Ascending aorta (tissue), 2 donors: ENCODE measurements at regions of chr12 and their contacts with region 1.

Region 1: DNA sequence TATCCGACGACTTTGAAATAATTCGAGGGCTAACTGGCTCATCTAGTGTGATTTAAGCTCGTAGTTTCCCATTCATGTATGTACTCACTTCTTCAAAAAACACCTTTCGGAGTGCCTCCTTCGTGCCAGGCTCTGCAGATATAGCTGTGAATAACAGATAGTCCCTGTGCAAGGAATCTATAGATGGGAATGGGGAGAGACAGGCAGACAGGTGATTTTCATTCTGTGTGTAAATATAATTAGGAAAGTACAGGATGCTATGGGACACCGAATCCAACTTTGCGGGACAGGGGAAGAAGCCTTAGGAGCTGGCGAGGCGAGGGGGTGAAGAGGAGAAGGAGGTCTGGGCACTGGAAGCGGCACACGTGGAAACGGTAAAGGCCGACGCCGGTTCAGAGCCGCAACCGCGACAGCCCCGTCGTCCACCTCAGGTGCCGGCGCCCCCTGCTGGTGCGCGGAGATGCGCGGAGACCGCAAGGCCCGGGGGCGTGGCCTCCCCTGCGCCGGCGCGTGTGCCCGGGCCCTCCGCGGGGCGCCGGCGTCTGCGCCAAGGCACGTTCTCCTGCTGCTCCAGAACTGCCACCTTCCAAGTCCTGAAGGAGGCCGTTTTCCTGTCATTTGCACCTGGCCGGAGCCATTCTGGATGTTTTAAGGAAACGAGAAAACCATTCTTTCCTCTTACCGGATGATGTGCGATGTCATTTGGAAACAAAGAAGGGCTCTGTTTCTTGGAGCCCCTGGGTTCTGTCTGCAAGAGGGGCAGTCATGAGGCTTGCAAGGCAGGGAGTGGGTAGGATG is 18.0 kb upstream of the CACNA1C start:
- DNase-seq: peak; percentile 30 to 91
- H3K4me3 ChIP-seq: peak overlapping the region; percentile 42 to 54
- H3K27ac ChIP-seq: no peak overlapping the region
- H3K4me1 ChIP-seq: peaks cover 3 to 11% of the 10 kb centered on the region in 2 donors
- H3K27me3 ChIP-seq: no peaks in the 10 kb centered on the region
- CTCF ChIP-seq: peak; percentile 71 to 97 (median 76)

Region 2: GRCh38 chr12:1650260-1650977 is 384.4 kb before region 1 on chr12:
- intact Hi-C with region 1: loop called (anchors 10 kb)
- DNase-seq: no peak
- H3K4me3 ChIP-seq: no peak overlapping the region
- H3K27ac ChIP-seq: peak overlapping the region in 1 of 2 donors; percentile 47
- H3K4me1 ChIP-seq: peaks cover 0 to 12% of the 10 kb centered on the region in 2 donors
- H3K27me3 ChIP-seq: no peaks in the 10 kb centered on the region
- CTCF ChIP-seq: no peak

Region 3: DNA sequence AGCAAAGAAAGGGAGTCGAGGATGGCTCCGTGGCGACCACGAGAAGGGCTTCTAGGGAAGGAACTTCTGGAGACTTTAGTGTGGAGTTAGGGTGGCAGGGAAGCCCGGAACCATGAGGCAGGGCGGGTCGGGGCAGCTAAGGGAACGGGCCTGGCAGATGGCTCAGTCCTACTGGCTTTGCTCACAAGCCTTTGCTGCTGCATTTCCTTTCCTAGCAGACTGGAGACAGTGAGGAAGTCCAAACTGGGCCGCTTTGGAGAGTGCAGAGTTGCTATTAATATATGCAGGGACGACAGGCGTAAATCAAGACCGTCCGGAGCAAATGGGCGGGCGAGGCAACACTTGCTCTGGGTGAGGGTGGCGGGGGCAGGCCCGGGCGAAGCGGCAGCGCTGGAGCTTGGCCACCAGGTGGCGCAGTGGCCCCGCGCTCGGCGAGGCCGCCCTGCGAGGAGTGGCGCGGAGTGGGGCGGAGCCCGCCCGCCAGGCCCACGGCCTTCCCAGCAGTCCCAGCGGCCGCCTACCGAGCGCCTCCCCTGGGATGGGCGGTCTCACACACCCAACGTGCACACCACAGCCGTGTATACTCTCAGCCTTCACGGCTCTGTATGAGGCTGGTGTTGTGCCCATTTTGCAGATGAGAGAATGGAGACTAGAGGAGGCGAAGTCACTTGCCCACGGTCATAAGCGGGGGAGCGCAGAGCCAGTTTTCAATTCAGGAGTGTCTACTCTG is 238.9 kb before region 1 on chr12:
- intact Hi-C with region 1: loop called (anchors 1 kb)
- DNase-seq: peak; percentile 72 to 96
- H3K4me3 ChIP-seq: peak overlapping the region; percentile 73 to 81
- H3K27ac ChIP-seq: peak overlapping the region; percentile 56 to 81
- H3K4me1 ChIP-seq: peaks cover 6 to 13% of the 10 kb centered on the region in 2 donors
- H3K27me3 ChIP-seq: no peaks in the 10 kb centered on the region
- CTCF ChIP-seq: peak; percentile 77 to 100 (median 90)

Region 4: GRCh38 chr12:1917172-1918065 is 117.4 kb before region 1 on chr12:
- intact Hi-C with region 1: no loop called
- DNase-seq: no peak
- H3K4me3 ChIP-seq: peak overlapping the region in 1 of 2 donors; percentile 39
- H3K27ac ChIP-seq: peak overlapping the region; percentile 40 to 65
- H3K4me1 ChIP-seq: peaks cover 0 to 5% of the 10 kb centered on the region in 2 donors
- H3K27me3 ChIP-seq: no peaks in the 10 kb centered on the region
- CTCF ChIP-seq: no peak

Region 5: DNA sequence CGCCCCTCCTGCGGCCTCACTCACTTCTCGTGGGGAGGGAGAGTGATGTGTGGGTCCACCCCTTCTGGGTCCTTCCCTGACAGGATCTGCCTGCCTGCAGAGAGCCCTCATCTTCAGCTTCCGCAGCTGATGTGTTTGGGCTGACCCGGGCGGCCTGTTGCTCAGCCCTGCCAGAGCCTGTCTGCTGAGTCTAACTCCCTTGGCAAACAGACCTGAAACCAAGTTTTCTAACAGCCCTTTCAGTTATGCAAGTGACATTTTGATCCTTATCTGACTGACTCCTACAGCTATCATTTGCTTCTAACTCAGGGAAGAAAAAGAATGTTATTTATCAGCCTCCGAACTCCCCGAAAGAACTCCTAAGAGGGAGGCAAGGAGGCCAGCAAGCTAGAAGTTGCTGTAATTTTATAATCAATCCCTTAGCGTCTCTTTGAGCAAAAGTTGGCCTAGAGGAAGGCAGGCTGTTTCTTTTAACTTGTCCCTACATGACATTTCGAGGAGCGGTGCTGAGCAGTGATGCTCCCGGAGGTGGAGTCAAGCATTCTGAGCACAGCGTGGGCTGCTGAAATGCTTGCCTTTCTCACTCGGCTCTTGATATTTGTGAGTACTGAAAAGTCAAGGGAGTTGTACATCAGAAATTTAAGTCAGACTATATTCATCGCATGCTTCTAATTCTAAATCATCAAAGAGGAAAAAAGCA is 84.9 kb before region 1 on chr12:
- intact Hi-C with region 1: loop called (anchors 5 kb)
- DNase-seq: no peak
- H3K4me3 ChIP-seq: no peak overlapping the region
- H3K27ac ChIP-seq: peak overlapping the region in 1 of 2 donors; percentile 43
- H3K4me1 ChIP-seq: no peaks in the 10 kb centered on the region
- H3K27me3 ChIP-seq: no peaks in the 10 kb centered on the region
- CTCF ChIP-seq: no peak

Region 6: DNA sequence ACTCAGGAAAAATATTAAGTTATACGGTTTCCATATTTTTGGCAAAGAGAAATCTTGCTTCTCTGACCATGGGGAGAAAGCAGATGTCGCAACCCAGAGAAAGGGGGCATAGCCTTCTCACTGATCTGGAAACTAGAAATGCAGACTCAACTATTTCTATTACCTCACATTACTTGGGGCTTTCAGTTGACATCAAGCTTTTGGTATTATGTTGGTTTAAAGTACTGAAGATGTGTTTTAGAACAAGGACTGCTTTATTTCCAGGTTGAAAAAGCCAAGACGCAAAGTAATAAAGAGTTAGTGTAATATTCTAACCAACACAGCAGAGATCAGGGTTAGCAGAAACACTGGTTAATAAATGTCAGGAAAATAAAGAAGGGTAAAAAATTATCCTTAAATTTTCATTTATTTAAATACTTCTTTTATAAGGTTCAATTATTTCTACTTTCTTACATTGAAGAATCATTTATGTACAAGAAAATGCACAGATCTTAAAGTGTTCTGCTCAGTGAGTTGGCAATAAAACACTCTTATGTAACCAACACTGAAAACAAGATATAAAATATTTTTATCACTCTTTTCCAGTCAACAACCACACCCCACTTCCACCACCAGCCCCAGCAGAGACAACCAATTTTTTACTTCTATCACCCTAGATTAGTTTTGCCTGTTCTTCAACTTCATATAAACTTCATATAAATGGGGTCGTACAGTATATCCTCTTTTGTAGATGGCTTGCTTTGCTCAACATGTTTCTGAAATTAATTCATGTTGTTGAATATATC is 56.6 kb before region 1 on chr12:
- intact Hi-C with region 1: loop called (anchors 5 kb)
- DNase-seq: no peak
- H3K4me3 ChIP-seq: no peak overlapping the region
- H3K27ac ChIP-seq: peak overlapping the region; percentile 87
- H3K4me1 ChIP-seq: peaks cover 3 to 30% of the 10 kb centered on the region in 2 donors
- H3K27me3 ChIP-seq: no peaks in the 10 kb centered on the region
- CTCF ChIP-seq: no peak

Region 7: DNA sequence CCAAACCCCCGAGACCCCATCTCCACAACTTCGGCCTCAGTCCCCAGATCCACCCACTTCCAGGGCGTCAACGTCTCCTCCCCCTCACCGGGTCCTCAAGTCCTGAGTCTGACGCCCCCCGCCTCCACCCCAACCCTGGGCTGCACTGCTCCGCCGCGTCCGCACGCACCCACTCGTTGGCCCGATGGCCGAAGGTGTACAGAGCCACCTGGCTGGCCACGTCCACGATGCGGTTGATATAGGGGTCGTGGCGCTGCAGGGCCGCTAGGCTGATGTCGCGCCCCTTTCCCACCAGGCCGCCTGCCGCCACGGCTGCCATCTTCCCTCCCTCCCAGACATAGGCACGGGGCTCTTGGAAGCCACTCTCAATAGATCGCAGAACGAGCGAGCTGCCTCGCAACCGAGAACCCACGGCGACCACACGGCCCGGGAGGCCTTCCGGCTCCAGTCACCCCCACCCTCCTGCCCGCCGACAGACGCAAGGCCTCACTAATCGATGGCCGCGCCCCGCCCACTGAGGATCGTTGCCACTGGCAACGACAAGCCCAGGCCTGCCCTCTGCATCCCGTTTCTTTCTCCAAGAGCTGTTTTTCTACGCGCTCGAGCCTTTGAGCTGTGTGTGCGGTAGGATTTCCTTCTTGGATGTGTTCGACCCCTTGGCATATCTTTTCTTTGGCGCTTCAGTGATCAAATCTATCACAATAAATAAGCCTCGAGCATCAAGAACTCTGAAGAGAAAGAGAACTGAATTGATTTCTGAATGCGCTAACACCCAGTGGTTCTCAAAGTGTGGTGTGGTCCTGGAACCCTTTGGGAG is 30.5 kb before region 1 on chr12 and contains the start of gene DCP1B:
- intact Hi-C with region 1: loop called (anchors 2 kb)
- DNase-seq: peak; percentile 90 to 98
- H3K4me3 ChIP-seq: peak within 1 kb of the TSS; percentile 87 to 97
- H3K27ac ChIP-seq: peak within 1 kb of the TSS; percentile 89 to 95
- H3K4me1 ChIP-seq: peaks cover 7 to 15% of the 10 kb centered on the region in 2 donors
- H3K27me3 ChIP-seq: no peaks in the 10 kb centered on the region
- CTCF ChIP-seq: peak in 1 of 3 experiments; percentile 2
- total RNA-seq, gene DCP1B: 23.3 TPM

Region 8: GRCh38 chr12:2583091-2583497 is 548.3 kb after region 1 on chr12:
- intact Hi-C with region 1: loop called (anchors 5 kb)
- DNase-seq: peak in 1 of 2 donors; percentile 77
- H3K4me3 ChIP-seq: peak overlapping the region in 1 of 2 donors; percentile 44
- H3K27ac ChIP-seq: peak overlapping the region in 1 of 2 donors; percentile 38
- H3K4me1 ChIP-seq: peaks cover 0 to 6% of the 10 kb centered on the region in 2 donors
- H3K27me3 ChIP-seq: no peaks in the 10 kb centered on the region
- CTCF ChIP-seq: peak; percentile 86 to 94 (median 94)